Heart left ventricle (tissue), 16 donors: ENCODE measurements at regions of chr10 and their contacts with region 1.

Region 1: DNA sequence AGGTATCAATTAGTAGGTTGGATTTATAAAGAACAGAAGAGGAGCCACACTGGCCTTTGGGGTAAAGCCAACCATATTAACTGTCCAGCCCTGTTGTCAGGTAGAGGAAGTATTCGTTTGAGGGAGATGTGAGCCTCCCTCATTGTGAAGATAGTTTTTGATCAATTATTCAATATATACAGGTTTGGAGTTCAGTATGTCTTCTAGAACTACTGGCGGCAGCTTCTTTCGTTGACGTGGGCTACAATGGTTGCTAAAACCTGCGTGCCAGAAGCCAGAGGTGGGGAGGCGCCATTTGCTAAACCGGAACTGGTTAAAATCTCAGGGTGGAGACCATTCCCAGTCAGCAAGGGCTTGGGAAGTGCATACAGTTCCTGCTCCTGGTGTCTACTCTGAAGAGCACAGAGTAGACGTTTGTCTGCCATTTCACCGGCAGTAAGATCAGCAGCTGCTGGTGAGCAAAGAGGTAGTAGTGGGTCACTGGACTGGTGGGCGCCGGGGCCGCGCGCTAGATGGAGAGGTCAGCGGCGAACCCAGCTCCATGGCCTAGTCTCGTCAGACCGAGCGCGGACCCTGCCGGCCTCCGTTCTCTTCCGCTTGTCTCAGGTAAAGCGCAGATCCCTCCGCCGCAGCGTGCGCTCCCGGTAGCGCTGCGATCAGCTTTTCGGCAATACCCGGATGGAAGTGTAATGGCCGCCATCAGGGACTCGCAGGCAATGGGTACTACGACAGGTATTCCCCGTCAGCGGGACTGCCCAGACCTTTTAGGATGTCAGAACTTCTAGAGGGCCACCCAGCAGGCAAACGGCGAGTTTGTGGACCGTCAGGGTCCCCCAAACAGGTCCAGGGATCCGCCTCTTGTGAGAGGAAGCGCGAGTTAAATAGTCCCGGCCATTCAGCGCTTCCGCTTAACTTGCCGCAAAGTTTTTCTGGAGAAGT is at the start of gene ZNF518A:
- DNase-seq: peak; percentile 94 to 97 (median 95)
- ATAC-seq: peak; percentile 98 to 99 (median 98)
- H3K4me3 ChIP-seq: peak within 1 kb of the TSS; percentile 30 to 89 (median 79)
- H3K27ac ChIP-seq: peak within 1 kb of the TSS; percentile 85 to 100 (median 94)
- H3K4me1 ChIP-seq: peaks cover 0 to 22% (median 8%) of the 10 kb centered on the region in 12 donors
- H3K27me3 ChIP-seq: peaks cover under 1 to 44% (median 31%) of the 10 kb centered on the region in 9 donors
- CTCF ChIP-seq: peak in 1 of 12 donors; percentile 7
- POLR2A ChIP-seq: no peak
- total RNA-seq, gene ZNF518A: 7.4 to 17.9 (median 12.2) TPM

Region 2: DNA sequence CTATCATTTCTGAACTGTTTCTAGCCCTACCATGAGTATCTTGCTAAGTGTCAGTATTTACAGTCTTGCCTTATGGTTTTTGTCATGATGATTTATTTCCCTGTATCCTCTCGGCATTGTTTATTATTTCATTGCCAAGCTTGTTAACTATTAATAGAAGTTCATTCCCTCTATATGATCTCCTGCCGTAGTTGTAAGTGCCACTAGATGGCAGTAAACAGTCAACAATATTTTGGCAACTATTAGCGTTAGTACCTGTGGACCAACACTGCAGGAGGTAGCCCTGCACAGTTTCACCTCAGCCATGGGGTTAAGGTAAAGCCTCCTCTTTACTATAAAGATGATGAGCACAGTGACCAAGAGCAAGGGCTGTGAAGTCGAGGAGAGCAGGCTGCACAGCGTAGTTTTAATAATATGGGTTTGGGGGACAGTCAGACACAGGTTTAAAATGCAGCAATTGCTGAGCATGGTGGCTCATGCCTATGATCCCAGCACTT is 112.4 kb before region 1 on chr10:
- intact Hi-C with region 1: loop called in 1 of 10 experiments (anchors 1 kb)
- DNase-seq: peak in 1 of 5 donors; percentile 12
- ATAC-seq: peak; percentile 26 to 85 (median 72)
- H3K4me3 ChIP-seq: no peak overlapping the region
- H3K27ac ChIP-seq: no peak overlapping the region
- H3K4me1 ChIP-seq: peaks cover 0 to 5% (median 0%) of the 10 kb centered on the region in 12 donors
- H3K27me3 ChIP-seq: no peaks in the 10 kb centered on the region
- CTCF ChIP-seq: peak; percentile 58 to 84 (median 74)
- POLR2A ChIP-seq: no peak

Region 3: GRCh38 chr10:96043033-96043932 is 86.4 kb before region 1 on chr10 and contains the start of gene CCNJ:
- intact Hi-C with region 1: loop called in 3 of 10 experiments (anchors 2 to 5 kb)
- DNase-seq: peak; percentile 89 to 94 (median 90)
- ATAC-seq: peak; percentile 90 to 99 (median 98)
- H3K4me3 ChIP-seq: peak within 1 kb of the TSS; percentile 75 to 93 (median 88)
- H3K27ac ChIP-seq: peak within 1 kb of the TSS; percentile 31 to 92 (median 86)
- H3K4me1 ChIP-seq: peaks cover 0 to 22% (median 14%) of the 10 kb centered on the region in 12 donors
- H3K27me3 ChIP-seq: no peaks in the 10 kb centered on the region
- CTCF ChIP-seq: peak in 7 of 12 donors; percentile 9 to 47 (median 29)
- POLR2A ChIP-seq: peak; percentile 26 to 84
- total RNA-seq, gene CCNJ: 2.2 to 4.0 (median 2.7) TPM

Region 4: DNA sequence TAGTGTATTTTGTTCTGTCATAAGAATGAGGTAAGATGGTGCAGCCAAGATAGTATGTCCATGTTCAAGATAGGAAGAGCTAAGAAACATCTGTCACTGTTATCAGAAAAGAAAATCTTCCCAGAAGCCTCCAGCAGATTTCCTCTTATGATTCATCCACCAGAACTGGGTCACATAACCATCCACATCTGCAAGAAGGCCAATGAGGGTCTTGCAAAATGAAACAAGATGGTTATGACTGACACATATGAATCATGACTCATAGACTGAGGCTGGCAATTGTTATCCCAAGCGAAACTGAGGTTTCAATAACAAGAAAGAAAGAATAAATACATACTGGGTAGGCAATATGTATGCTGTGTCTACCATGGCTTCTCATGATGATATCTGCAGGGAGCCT is 55.9 kb before region 1 on chr10:
- intact Hi-C with region 1: no loop called
- DNase-seq: no peak
- ATAC-seq: no peak
- H3K4me3 ChIP-seq: no peak overlapping the region
- H3K27ac ChIP-seq: no peak overlapping the region
- H3K4me1 ChIP-seq: no peaks in the 10 kb centered on the region
- H3K27me3 ChIP-seq: no peaks in the 10 kb centered on the region
- CTCF ChIP-seq: no peak
- POLR2A ChIP-seq: no peak

Region 5: DNA sequence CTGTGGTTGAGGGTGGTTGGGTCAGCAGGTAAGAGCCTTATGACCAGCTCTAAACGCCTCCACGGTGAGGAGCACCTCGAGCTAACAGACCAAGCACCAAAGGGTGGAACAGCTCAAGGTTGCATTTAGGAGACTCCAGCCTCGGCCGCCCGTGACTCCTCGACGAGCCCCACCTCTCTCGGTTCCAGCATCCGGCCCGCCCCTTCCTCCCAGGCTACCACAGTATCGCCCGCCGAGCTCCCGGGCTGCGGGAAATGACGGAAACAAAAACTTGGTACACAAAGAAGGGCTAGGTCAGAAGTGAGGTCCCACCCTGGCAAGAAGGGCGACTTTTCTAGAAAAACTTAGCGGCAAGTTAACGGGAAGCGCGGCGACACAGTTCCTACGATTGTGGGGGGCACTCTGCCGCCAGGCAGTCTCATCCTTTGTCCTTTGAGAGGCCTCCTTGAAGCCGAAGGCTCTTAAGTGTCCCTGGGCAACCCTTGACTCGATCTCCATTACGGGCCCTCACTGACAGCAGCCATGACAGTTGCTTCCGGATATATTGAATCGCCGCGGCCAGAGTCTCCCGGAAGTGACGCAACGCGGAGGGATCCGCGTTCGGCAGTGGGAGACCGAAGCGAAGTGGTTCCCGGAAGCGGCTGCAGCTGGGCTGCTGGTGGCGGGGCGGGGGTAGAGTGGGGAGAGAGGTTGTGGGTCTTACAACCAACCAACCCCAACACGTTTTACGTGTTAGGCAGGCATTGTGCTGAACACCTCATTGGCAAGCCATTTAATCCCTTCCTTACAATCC is 39.8 kb before region 1 on chr10:
- intact Hi-C with region 1: loop called (anchors 1 to 5 kb)
- DNase-seq: peak; percentile 94 to 97 (median 96)
- ATAC-seq: peak; percentile 97 to 99 (median 98)
- H3K4me3 ChIP-seq: peak overlapping the region; percentile 56 to 90 (median 80)
- H3K27ac ChIP-seq: peak overlapping the region; percentile 87 to 99 (median 93)
- H3K4me1 ChIP-seq: peaks cover 0 to 15% (median 1%) of the 10 kb centered on the region in 12 donors
- H3K27me3 ChIP-seq: peaks cover 2 to 38% (median 23%) of the 10 kb centered on the region in 9 donors
- CTCF ChIP-seq: no peak
- POLR2A ChIP-seq: peak in 1 of 2 donors; percentile 39

Region 6: GRCh38 chr10:96244354-96244753 is 114.7 kb after region 1 on chr10:
- intact Hi-C with region 1: no loop called
- DNase-seq: no peak
- ATAC-seq: no peak
- H3K4me3 ChIP-seq: no peak overlapping the region
- H3K27ac ChIP-seq: no peak overlapping the region
- H3K4me1 ChIP-seq: no peaks in the 10 kb centered on the region
- H3K27me3 ChIP-seq: peaks cover 0 to 19% (median 0%) of the 10 kb centered on the region in 9 donors
- CTCF ChIP-seq: no peak
- POLR2A ChIP-seq: no peak

Region 7: DNA sequence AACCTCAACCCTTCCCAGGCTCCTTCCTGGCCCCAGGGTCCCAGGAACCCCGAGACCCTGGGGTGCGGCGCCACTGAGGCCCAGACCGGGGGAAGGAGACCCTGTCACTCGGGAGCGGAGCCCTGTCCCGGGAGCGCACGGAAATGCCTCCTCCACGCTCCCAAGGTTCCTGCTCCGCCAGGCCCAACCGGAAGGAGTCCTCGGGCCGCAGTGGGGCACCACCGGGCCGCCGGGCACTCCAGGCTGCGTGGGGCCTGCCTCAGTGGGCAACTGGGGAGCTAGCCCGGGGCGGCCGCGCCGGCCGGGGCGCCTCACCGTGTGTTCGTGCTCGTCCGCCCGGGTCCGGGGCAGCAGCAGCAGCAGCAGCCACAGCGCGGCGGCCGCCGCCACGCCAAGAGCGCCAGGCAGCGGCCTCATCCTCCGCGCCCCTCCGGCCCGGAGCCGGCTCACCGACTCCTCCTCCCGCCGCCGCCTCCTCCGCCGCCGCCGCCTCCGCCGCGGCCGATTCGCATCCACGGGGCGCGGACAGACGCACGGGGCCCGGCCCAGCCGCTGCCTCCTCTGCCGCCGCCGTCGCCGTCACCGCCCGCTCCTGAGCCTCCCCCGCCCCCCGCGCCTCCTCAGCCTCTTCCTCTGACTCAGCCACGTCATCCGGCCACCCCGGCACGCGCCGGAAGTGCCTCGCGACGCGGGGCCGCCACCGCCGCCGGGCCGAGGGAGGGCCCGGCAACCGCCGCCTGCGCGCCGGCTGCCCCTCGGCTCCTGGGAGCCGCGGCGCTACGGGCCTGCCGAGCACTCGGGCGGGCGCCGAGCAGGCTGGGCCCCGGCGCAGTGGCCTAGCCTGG is 457.0 kb after region 1 on chr10 and contains the start of gene TM9SF3:
- intact Hi-C with region 1: loop called in 1 of 10 experiments (anchors 10 kb)
- DNase-seq: peak; percentile 95 to 97 (median 96)
- ATAC-seq: peak; percentile 84 to 96 (median 94)
- H3K4me3 ChIP-seq: peak within 1 kb of the TSS; percentile 66 to 99 (median 90)
- H3K27ac ChIP-seq: peak within 1 kb of the TSS; percentile 98 to 100 (median 99)
- H3K4me1 ChIP-seq: peaks cover 11 to 62% (median 50%) of the 10 kb centered on the region in 12 donors
- H3K27me3 ChIP-seq: no peaks in the 10 kb centered on the region
- CTCF ChIP-seq: peak in 2 of 12 donors; percentile 6 to 26
- POLR2A ChIP-seq: peak in 1 of 2 donors; percentile 63
- total RNA-seq, gene TM9SF3: 35.1 to 75.6 (median 67.4) TPM